CD4-positive, alpha-beta memory T cell (primary cell): ENCODE measurements at regions of chr12 and their contacts with region 1.

Region 1: GRCh38 chr12:49707128-49707811 is at the start of gene FMNL3:
- DNase-seq: peak; percentile 97 to 99 (median 98)
- H3K4me3 ChIP-seq: peak within 1 kb of the TSS; percentile 66 to 71
- H3K4me3 Mint-ChIP-seq: peak within 1 kb of the TSS; percentile 90 to 95 (median 93)
- H3K27ac ChIP-seq: peak within 1 kb of the TSS; percentile 77
- H3K27ac Mint-ChIP-seq: peak within 1 kb of the TSS; percentile 87 to 95 (median 93)
- H3K4me1 ChIP-seq: peaks cover 40% of the 10 kb centered on the region
- H3K4me1 Mint-ChIP-seq: peaks cover 30 to 50% (median 39%) of the 10 kb centered on the region in 4 donors
- H3K27me3 ChIP-seq: no peaks in the 10 kb centered on the region
- H3K27me3 Mint-ChIP-seq: peaks cover 5 to 7% of the 10 kb centered on the region in 2 donors
- total RNA-seq, gene FMNL3: 27.9 to 28.1 TPM

Region 2: GRCh38 chr12:48580831-48581230 is 1126.4 kb before region 1 on chr12:
- CTCF ChIA-PET with region 1: no interaction called
- POLR2A ChIA-PET with region 1: no interaction called
- intact Hi-C with region 1: no loop called
- DNase-seq: no peak
- H3K4me3 ChIP-seq: no peak overlapping the region
- H3K4me3 Mint-ChIP-seq: no peak overlapping the region
- H3K27ac ChIP-seq: no peak overlapping the region
- H3K27ac Mint-ChIP-seq: no peak overlapping the region
- H3K4me1 ChIP-seq: no peaks in the 10 kb centered on the region
- H3K4me1 Mint-ChIP-seq: peaks cover 0 to 4% (median 3%) of the 10 kb centered on the region in 4 donors
- H3K27me3 ChIP-seq: no peaks in the 10 kb centered on the region
- H3K27me3 Mint-ChIP-seq: peaks cover 14 to 15% of the 10 kb centered on the region in 2 donors

Region 3: GRCh38 chr12:49232940-49233841 is 474.1 kb before region 1 on chr12:
- CTCF ChIA-PET with region 1: no interaction called
- POLR2A ChIA-PET with region 1: no interaction called
- intact Hi-C with region 1: no loop called
- DNase-seq: no peak
- H3K4me3 ChIP-seq: no peak overlapping the region
- H3K4me3 Mint-ChIP-seq: peak overlapping the region; percentile 21 to 61 (median 53)
- H3K27ac ChIP-seq: no peak overlapping the region
- H3K27ac Mint-ChIP-seq: peak overlapping the region in 6 of 7 donors; percentile 33 to 81 (median 54)
- H3K4me1 ChIP-seq: no peaks in the 10 kb centered on the region
- H3K4me1 Mint-ChIP-seq: peaks cover 0 to 13% (median 6%) of the 10 kb centered on the region in 4 donors
- H3K27me3 ChIP-seq: no peaks in the 10 kb centered on the region
- H3K27me3 Mint-ChIP-seq: no peaks in the 10 kb centered on the region

Region 4: DNA sequence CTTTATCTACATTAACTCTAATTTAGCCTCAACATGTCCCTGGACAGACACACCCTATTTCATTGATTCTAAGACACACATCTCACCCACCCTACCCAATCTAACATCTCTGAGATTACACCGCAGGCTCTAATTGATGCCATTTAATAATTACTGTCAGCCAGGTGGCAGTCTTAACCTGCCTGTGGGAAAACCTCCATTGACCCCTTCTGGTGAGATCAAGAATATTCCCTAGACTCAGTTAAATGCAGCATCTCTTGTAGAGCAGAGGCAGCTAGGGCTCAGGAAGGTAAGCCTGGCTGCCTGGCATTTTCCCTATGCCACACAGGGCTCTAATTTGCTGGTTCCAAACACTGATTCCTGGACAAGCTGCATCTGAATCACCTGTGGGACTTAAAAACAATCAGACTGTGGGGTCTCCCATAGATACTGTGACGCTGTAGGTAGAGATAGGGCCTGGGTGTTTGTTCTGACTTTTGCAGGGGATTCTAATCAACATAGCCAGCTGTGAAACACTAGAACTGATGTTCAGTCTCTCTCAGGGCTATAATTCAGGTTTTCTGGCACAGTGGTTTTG is 153.7 kb before region 1 on chr12:
- CTCF ChIA-PET with region 1: interaction called, 4 read pairs
- POLR2A ChIA-PET with region 1: no interaction called
- intact Hi-C with region 1: loop called (anchors 1 kb)
- DNase-seq: peak in 4 of 5 donors; percentile 37 to 59 (median 50)
- H3K4me3 ChIP-seq: no peak overlapping the region
- H3K4me3 Mint-ChIP-seq: no peak overlapping the region
- H3K27ac ChIP-seq: no peak overlapping the region
- H3K27ac Mint-ChIP-seq: peak overlapping the region in 3 of 7 donors; percentile 14 to 54 (median 21)
- H3K4me1 ChIP-seq: peaks cover 4% of the 10 kb centered on the region
- H3K4me1 Mint-ChIP-seq: peaks cover 5 to 11% (median 8%) of the 10 kb centered on the region in 4 donors
- H3K27me3 ChIP-seq: peaks cover 3% of the 10 kb centered on the region
- H3K27me3 Mint-ChIP-seq: peaks cover 3 to 12% of the 10 kb centered on the region in 2 donors

Region 5: DNA sequence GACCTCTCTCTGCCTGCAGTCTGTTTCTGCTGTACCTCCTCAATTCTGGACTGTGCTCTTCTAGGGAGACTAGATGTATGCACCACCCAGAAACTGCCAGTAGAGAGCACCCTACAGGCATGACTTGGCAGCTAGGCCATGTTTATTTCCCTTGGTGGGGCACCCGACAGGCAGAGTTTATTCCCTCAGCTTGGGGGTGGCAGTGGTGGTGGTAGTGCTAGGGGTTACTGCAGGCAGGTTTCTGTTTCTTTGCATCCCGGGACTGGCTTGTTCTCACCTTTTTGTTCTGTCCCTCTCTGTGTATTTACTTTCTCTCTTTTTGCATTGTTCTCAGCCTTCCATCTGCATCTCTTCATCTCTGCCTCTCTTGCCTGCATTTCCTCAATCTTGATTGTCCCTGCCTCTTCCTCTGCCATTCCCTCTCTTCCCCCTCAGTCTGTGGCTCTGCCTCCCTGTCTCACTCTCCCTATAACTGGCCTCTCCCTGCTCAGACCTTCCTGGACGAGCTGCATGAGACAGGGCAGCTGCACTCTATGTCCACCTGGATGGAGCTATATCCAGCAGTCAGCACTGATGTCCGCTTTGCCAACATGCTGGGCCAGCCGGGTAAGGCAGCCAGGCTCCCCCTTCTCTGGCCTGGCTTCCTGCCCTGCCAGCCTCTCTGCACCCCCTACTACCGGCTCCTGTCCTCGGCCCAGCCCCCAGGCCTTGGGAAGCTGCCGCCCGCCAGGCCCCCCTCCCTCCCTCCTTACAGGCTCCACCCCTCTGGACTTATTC is 70.1 kb before region 1 on chr12:
- CTCF ChIA-PET with region 1: interaction called, 543 read pairs
- POLR2A ChIA-PET with region 1: interaction called, 10 read pairs
- intact Hi-C with region 1: loop called (anchors 2 kb)
- DNase-seq: peak; percentile 53 to 71 (median 59)
- H3K4me3 ChIP-seq: no peak overlapping the region
- H3K4me3 Mint-ChIP-seq: no peak overlapping the region
- H3K27ac ChIP-seq: no peak overlapping the region
- H3K27ac Mint-ChIP-seq: peak overlapping the region in 5 of 7 donors; percentile 2 to 81 (median 30)
- H3K4me1 ChIP-seq: peaks cover 8% of the 10 kb centered on the region
- H3K4me1 Mint-ChIP-seq: peaks cover 9 to 13% (median 11%) of the 10 kb centered on the region in 4 donors
- H3K27me3 ChIP-seq: no peaks in the 10 kb centered on the region
- H3K27me3 Mint-ChIP-seq: no peaks in the 10 kb centered on the region

Region 6: DNA sequence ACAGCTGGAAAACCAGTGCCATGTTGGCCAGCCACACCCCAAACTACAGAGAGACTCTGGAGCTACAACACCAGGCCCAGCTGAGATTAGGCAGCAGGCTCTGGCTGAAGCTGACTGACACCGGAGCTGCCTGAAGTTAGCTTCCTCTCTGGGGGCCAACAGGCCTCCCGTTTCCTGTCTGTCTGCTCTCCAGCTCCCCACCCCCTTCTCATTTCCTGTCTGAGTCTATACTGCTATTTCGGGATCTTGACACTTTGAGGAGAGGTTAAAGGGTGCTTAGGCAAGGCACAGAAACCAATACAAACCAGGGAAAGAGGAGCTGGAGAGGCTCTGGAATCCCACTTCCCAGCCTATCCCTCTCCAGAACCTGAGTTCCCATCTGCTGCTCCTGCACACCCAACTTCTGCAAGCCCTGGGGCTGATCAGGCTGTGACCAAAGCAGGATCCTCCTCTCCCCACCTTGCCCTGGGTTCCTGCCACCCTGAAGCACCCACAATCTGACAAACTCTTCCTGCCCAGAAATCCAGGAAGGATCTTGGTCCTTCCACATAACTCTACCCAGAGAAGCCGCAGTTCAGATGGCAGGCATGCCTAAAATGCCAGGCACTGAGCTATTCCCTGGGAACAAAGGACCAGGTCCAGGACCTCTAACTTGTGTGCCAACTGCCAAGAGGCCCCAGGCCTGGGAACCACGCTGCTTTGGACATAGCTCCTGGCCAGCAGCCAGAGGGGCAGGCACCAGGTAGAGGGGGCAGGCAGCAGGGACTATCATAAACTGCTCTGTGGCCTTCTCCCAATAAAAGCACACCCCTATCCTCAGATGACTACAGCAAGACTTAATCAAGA is 44.0 kb before region 1 on chr12:
- CTCF ChIA-PET with region 1: interaction called, 29 read pairs
- POLR2A ChIA-PET with region 1: interaction called, 58 read pairs
- intact Hi-C with region 1: loop called (anchors 1 kb)
- DNase-seq: peak; percentile 71 to 93 (median 75)
- H3K4me3 ChIP-seq: peak overlapping the region; percentile 48 to 50
- H3K4me3 Mint-ChIP-seq: peak overlapping the region; percentile 61 to 91 (median 84)
- H3K27ac ChIP-seq: peak overlapping the region; percentile 57
- H3K27ac Mint-ChIP-seq: peak overlapping the region; percentile 92 to 99 (median 97)
- H3K4me1 ChIP-seq: peaks cover 52% of the 10 kb centered on the region
- H3K4me1 Mint-ChIP-seq: peaks cover 56 to 84% (median 67%) of the 10 kb centered on the region in 4 donors
- H3K27me3 ChIP-seq: no peaks in the 10 kb centered on the region
- H3K27me3 Mint-ChIP-seq: no peaks in the 10 kb centered on the region

Region 7: GRCh38 chr12:49689785-49690184 is 17.5 kb before region 1 on chr12:
- CTCF ChIA-PET with region 1: interaction called, 11 read pairs
- POLR2A ChIA-PET with region 1: interaction called, 15 read pairs
- intact Hi-C with region 1: no loop called
- DNase-seq: no peak
- H3K4me3 ChIP-seq: no peak overlapping the region
- H3K4me3 Mint-ChIP-seq: peak overlapping the region in 2 of 8 donors; percentile 4 to 31
- H3K27ac ChIP-seq: no peak overlapping the region
- H3K27ac Mint-ChIP-seq: peak overlapping the region in 1 of 7 donors; percentile 3
- H3K4me1 ChIP-seq: peaks cover 7% of the 10 kb centered on the region
- H3K4me1 Mint-ChIP-seq: peaks cover 22 to 46% (median 28%) of the 10 kb centered on the region in 4 donors
- H3K27me3 ChIP-seq: no peaks in the 10 kb centered on the region
- H3K27me3 Mint-ChIP-seq: no peaks in the 10 kb centered on the region

Region 8: DNA sequence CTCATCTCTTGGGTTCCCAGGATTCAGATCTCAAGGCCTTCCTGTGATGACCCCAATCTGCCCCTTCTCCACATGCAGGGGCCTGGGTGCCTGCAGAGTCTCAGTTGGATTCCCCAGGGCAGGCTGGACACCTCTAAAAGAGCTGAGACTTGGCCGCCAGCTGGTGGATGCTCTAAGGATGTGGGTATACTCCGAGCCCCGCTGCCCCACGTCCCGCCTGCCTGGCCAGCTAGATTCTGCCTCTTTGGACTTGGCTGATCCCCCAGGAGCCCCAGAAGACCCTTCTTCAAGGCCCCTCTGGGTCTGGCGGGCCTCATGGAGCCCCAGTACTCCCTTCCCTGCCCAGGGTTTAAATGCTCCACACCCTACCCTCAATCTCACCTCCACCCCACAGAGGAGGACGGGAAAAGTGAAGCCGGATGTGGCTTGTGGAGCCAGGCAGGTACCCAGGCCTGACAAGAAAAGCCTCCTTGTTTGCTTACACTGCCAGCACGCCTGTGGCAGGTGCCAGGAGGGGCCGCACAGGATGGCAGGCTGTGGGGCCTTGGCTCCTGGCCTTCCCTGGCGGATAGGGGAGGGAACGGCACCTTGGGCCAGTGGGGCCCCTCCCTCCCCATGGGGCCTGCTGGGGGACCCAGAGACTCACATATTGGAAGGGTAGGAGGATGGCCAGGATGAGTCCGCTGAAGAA is 181.3 kb after region 1 on chr12:
- CTCF ChIA-PET with region 1: no interaction called
- POLR2A ChIA-PET with region 1: no interaction called
- intact Hi-C with region 1: no loop called
- DNase-seq: peak in 1 of 5 donors; percentile 48
- H3K4me3 ChIP-seq: no peak overlapping the region
- H3K4me3 Mint-ChIP-seq: peak overlapping the region in 1 of 8 donors; percentile 48
- H3K27ac ChIP-seq: no peak overlapping the region
- H3K27ac Mint-ChIP-seq: no peak overlapping the region
- H3K4me1 ChIP-seq: no peaks in the 10 kb centered on the region
- H3K4me1 Mint-ChIP-seq: peaks cover 0 to 2% (median 0%) of the 10 kb centered on the region in 4 donors
- H3K27me3 ChIP-seq: no peaks in the 10 kb centered on the region
- H3K27me3 Mint-ChIP-seq: peaks cover 3 to 6% of the 10 kb centered on the region in 2 donors

Region 9: GRCh38 chr12:51238510-51239334 is 1531.5 kb after region 1 on chr12 and contains the start of gene DAZAP2:
- CTCF ChIA-PET with region 1: no interaction called
- POLR2A ChIA-PET with region 1: no interaction called
- intact Hi-C with region 1: no loop called
- DNase-seq: peak; percentile 91 to 95 (median 94)
- H3K4me3 ChIP-seq: peak within 1 kb of the TSS; percentile 98 to 100
- H3K4me3 Mint-ChIP-seq: peak within 1 kb of the TSS; percentile 93 to 99 (median 98)
- H3K27ac ChIP-seq: peak within 1 kb of the TSS; percentile 100
- H3K27ac Mint-ChIP-seq: peak within 1 kb of the TSS; percentile 99 to 100 (median 100)
- H3K4me1 ChIP-seq: peaks cover 40% of the 10 kb centered on the region
- H3K4me1 Mint-ChIP-seq: peaks cover 27 to 57% (median 40%) of the 10 kb centered on the region in 4 donors
- H3K27me3 ChIP-seq: no peaks in the 10 kb centered on the region
- H3K27me3 Mint-ChIP-seq: peaks cover 0 to 1% of the 10 kb centered on the region in 2 donors
- total RNA-seq, gene DAZAP2: 275 to 286 TPM